T-cell (primary cell): ENCODE measurements at regions of chr4 and their contacts with region 1.

Region 1: DNA sequence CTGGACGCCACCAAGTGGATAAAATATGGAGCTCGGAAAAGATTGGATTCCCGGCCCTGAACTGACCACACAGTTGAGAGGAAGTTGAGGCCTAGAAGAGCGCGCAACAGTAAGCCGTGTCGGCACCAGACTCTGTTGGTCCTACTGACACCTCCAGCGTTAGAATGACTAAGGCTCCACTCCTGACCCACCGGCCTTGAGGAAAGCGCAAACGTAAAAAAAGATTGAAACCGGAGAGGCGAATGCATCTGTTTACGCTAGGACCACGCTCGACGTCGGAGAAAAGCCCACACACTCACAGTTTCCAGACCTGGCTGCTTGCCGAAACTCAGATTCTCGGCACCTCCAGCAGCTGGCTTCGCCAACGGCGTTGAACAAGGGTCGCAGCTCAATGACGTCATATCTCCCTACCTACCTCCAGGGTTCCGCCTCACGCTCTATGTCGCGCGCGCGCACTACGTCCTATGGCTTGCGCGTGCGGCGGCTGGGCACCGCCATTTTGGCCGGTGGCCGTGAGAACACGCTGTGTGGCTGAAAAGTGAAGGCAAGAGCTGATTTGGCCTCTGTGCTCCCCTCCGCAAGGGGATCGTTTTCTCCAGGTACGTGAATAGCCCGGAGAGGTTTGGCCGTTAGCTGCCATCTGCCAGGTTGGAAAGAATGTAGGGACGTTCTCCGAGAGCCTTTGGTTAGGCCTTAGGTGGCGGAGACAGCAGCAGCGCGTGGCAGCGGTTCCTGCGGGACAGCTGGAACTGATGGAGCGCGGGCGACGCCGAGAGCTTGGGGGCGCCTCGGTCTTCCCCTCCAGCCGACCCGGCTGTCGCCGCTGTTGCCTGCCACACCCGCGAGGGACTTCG is at the starts of genes ABCE1 and ANAPC10:
- DNase-seq: peak; percentile 78 to 100 (median 95)
- ATAC-seq: peak; percentile 93 to 94 (median 94)
- H3K4me3 ChIP-seq: peak within 1 kb of the TSS; percentile 88 to 98
- H3K4me3 Mint-ChIP-seq: peak within 1 kb of the TSS; percentile 93 to 97 (median 96)
- H3K27ac ChIP-seq: peak within 1 kb of the TSS; percentile 85
- H3K27ac Mint-ChIP-seq: peak within 1 kb of the TSS; percentile 94 to 97
- H3K4me1 ChIP-seq: peaks cover 15 to 30% of the 10 kb centered on the region in 2 experiments
- H3K4me1 Mint-ChIP-seq: peaks cover 44 to 52% (median 46%) of the 10 kb centered on the region in 3 donors
- H3K27me3 ChIP-seq: no peaks in the 10 kb centered on the region
- H3K27me3 Mint-ChIP-seq: no peaks in the 10 kb centered on the region
- total RNA-seq, gene ABCE1: 47.7 to 73.8 (median 65.4) TPM
- total RNA-seq, gene ANAPC10: 13.0 to 21.3 (median 16.3) TPM

Region 2: DNA sequence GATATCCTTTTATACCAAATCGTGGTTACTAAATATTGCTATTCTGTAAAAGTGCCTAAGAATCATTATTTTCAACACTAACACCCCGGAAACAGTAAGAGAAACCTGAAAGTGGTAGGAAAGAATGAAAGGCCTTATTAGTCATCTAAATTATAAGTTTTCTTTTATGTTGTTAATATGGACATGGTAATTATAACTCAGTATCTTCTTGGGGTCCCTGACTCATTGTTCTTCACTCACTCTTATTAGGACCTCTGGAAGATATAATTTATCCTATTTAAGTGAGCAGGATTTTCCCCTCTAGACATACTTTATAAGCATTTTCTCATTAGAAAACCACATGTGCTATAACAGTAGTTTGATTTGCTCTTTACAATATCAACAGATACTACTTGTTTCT is 1533.6 kb before region 1 on chr4:
- CTCF ChIA-PET with region 1: no interaction called
- POLR2A ChIA-PET with region 1: interaction called in 1 of 2 experiments, 15 read pairs
- DNase-seq: no peak
- ATAC-seq: no peak
- H3K4me3 ChIP-seq: no peak overlapping the region
- H3K4me3 Mint-ChIP-seq: no peak overlapping the region
- H3K27ac ChIP-seq: no peak overlapping the region
- H3K27ac Mint-ChIP-seq: no peak overlapping the region
- H3K4me1 ChIP-seq: peaks cover 0 to 6% of the 10 kb centered on the region in 2 experiments
- H3K4me1 Mint-ChIP-seq: peaks cover 14 to 22% (median 15%) of the 10 kb centered on the region in 3 donors
- H3K27me3 ChIP-seq: peaks cover 0 to 2% of the 10 kb centered on the region in 2 experiments
- H3K27me3 Mint-ChIP-seq: no peaks in the 10 kb centered on the region

Region 3: GRCh38 chr4:145047151-145047550 is 50.9 kb before region 1 on chr4:
- CTCF ChIA-PET with region 1: no interaction called
- POLR2A ChIA-PET with region 1: no interaction called
- DNase-seq: no peak
- ATAC-seq: no peak
- H3K4me3 ChIP-seq: no peak overlapping the region
- H3K4me3 Mint-ChIP-seq: no peak overlapping the region
- H3K27ac ChIP-seq: no peak overlapping the region
- H3K27ac Mint-ChIP-seq: no peak overlapping the region
- H3K4me1 ChIP-seq: no peaks in the 10 kb centered on the region
- H3K4me1 Mint-ChIP-seq: peaks cover 6 to 10% (median 9%) of the 10 kb centered on the region in 3 donors
- H3K27me3 ChIP-seq: no peaks in the 10 kb centered on the region
- H3K27me3 Mint-ChIP-seq: no peaks in the 10 kb centered on the region

Region 4: GRCh38 chr4:145179281-145179860 is 81.3 kb after region 1 on chr4:
- CTCF ChIA-PET with region 1: interaction called in 1 of 2 experiments, 5 read pairs
- POLR2A ChIA-PET with region 1: interaction called, 6 to 19 read pairs
- DNase-seq: peak in 34 of 35 experiments; percentile 49 to 85 (median 63)
- ATAC-seq: peak in 3 of 4 experiments; percentile 25 to 45 (median 36)
- H3K4me3 ChIP-seq: peak overlapping the region; percentile 68 to 70
- H3K4me3 Mint-ChIP-seq: peak overlapping the region; percentile 89 to 95 (median 93)
- H3K27ac ChIP-seq: peak overlapping the region; percentile 89
- H3K27ac Mint-ChIP-seq: peak overlapping the region; percentile 90 to 95
- H3K4me1 ChIP-seq: peaks cover 24 to 34% of the 10 kb centered on the region in 2 experiments
- H3K4me1 Mint-ChIP-seq: peaks cover 41 to 51% (median 42%) of the 10 kb centered on the region in 3 donors
- H3K27me3 ChIP-seq: no peaks in the 10 kb centered on the region
- H3K27me3 Mint-ChIP-seq: no peaks in the 10 kb centered on the region